IMR-90 (cell line): ENCODE measurements at regions of chr1 and their contacts with region 1.

Region 1: GRCh38 chr1:104973516-104973915 is 1223.8 kb downstream of the AMY1C start:
- DNase-seq: no peak
- ATAC-seq: no peak
- H3K4me3 ChIP-seq: no peak overlapping the region
- H3K27ac ChIP-seq: no peak overlapping the region
- H3K4me1 ChIP-seq: no peaks in the 10 kb centered on the region
- H3K27me3 ChIP-seq: no peaks in the 10 kb centered on the region
- CTCF ChIP-seq: no peak
- POLR2A ChIP-seq: no peak
- RAD21 ChIP-seq: no peak

Region 2: DNA sequence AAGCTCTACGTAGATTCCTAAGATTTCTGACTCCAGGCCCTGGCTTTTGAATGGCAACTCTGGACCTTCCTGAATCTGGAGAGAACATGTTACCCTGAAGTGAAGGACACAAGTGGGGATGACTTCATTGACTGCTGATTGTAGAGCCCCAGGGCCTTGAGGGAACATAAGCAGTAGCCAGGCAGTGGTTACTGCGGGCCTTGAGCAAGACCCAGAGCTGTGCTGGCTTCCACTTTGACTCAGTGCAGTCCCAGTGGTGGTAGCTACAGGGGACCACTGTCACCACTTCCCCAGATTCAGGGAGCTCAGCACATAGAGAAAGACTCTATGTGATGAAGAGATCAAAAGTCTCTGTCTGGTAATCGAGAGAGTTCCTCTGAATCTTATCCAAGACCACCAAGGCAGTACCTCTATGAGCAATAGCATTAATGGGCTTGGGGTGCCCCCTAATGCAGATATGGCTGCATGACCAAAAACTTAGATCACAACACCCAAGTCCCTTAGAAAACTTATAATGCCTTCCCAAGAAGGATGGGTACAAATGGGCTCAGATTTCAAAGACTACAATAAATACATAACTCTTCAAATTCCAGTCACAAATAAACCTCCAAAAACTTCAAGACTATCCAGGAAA is 54.4 kb after region 1 on chr1:
- CTCF ChIA-PET with region 1: no interaction called
- POLR2A ChIA-PET with region 1: interaction called, 10 read pairs
- dilution Hi-C with region 1: no loop called
- in situ Hi-C with region 1: no loop called
- intact Hi-C with region 1: no loop called
- DNase-seq: no peak
- ATAC-seq: no peak
- H3K4me3 ChIP-seq: no peak overlapping the region
- H3K27ac ChIP-seq: no peak overlapping the region
- H3K4me1 ChIP-seq: no peaks in the 10 kb centered on the region
- H3K27me3 ChIP-seq: no peaks in the 10 kb centered on the region
- CTCF ChIP-seq: no peak
- POLR2A ChIP-seq: no peak
- RAD21 ChIP-seq: no peak